Posterior vena cava (tissue), 2 donors: ENCODE measurements at regions of chr15 and their contacts with region 1.

Region 1: DNA sequence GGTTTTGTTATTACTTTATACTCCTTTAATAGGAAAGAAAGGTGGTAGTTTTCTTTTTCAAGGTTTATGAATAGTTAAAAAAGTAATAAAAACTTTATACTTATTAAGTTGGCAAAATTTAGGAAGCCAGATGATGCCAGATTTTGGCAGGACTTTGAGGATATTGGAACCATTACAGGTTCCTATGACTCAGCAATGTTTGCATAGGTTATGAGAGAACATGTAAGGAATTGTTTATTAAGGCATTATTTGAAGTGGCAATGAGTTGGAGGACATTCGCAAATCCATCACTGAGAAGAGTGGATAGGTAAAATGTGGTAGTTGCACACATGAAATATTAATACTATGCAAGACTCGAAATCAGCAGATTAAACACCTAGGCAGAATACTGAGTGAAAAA is 29.9 kb downstream of the CDAN1 start:
- DNase-seq: no peak

Region 2: GRCh38 chr15:41790756-41791546 is 916.1 kb before region 1 on chr15:
- intact Hi-C with region 1: no loop called
- DNase-seq: no peak

Region 3: DNA sequence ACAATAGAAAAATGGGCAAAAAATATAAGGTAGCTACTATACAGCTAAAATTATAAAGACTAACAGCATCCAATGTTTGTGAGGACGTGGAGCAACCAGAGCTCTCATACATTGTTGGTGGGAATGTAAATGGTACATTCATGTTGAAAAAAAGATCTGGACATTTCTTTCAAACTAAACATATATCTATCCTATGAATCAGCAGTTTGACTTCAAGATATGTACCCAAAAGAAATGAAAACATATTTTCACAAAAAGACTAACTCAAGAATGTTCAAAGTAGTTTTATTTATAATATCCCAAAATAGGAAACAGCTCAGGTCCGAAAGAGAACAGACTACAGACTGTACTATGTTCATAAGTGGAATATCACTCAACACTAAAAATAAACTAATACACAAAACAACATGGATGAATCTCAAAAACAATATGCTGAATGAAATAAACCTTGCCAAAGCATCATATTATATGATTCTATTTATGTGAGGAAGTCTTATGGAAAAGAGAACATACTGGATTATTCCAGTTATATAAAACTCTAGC is 222.3 kb after region 1 on chr15:
- intact Hi-C with region 1: loop called (anchors 5 kb)
- DNase-seq: no peak